Prostate gland (tissue), 2 donors: ENCODE measurements at regions of chr7 and their contacts with region 1.

Region 1: DNA sequence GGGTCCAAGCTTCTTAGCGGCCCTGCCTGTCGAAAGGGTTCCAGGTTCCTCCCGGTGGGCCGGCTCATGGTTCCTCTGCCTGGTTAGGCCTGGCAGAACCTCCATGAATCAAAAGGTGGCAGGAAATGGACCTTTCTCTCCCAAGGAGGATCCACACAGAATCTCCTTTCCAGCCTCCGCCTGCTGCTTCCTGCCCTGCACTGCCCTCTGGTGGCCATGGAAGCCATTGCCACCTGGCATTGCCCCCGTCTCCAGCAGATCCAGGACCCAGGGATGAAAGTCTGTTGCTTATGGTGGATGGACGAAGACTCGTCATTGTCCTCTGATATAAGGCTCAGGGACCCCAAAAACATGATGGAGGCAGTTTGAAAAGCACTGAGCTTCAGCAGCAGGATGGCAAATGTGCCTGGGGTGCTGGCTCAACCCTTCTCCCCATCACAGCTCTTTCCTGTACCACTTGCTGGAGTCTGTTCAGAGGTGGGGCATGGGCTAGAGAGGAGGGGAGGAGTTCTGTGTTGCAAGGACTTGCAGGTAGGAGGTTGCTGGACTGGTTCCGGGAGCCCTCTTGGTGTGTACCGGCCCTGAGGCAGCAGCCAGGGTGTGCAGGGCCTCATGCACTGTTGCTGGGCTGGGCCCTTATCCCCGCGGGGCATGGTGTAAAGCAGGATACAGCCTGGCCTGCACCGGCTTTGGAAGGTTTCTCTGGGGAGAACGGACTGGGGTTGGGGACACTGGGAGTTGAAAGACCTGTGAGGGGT is 11.3 kb upstream of the INMT start:
- DNase-seq: peak; percentile 57
- H3K4me3 ChIP-seq: no peak overlapping the region
- H3K27ac ChIP-seq: no peak overlapping the region
- H3K4me1 ChIP-seq: no peaks in the 10 kb centered on the region
- H3K27me3 ChIP-seq: no peaks in the 10 kb centered on the region
- CTCF ChIP-seq: peak; percentile 85 to 91 (median 88)
- POLR2A ChIP-seq: no peak

Region 2: DNA sequence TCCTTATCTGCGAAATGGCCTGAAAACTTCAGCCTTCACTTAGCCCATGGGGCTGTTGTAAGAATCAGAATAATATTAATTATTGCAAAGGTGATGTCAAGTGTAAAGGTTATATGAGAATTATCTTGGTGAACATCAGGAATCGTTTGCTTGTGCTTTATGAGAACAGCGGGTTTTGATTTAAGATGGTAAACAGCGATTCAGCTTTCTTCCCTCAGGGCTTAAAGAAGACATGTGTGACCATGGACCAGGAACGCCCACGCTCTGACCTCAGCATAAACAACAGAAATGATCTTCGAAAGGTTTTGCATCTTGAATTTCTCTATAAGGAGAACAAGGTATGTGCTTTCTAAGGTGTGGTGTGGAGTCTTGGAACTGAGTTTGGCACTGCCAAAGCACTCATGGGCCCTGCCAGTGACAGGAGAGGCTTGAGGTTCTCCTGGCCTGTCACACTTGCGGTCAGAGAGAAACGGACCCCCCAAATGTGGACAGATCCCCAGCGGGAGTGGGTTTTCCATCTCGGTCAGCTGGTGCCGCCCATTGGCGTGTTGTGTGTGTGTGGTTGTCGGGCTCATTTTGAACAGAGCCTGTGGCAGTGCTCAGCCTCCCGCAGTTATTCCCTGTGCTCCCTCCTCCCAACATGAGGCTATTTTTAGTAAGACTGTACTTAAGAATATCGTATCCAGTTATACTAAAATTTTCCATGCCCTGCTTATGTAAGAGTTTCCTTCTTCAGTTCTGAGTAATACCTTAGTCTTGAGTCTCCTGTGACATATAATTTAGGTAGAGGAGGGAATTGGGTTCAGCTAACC is 37.8 kb after region 1 on chr7:
- intact Hi-C with region 1: no loop called
- DNase-seq: peak; percentile 36
- H3K4me3 ChIP-seq: no peak overlapping the region
- H3K27ac ChIP-seq: peak overlapping the region; percentile 36 to 64
- H3K4me1 ChIP-seq: peaks cover 4% of the 10 kb centered on the region
- H3K27me3 ChIP-seq: no peaks in the 10 kb centered on the region
- CTCF ChIP-seq: no peak
- POLR2A ChIP-seq: no peak

Region 3: DNA sequence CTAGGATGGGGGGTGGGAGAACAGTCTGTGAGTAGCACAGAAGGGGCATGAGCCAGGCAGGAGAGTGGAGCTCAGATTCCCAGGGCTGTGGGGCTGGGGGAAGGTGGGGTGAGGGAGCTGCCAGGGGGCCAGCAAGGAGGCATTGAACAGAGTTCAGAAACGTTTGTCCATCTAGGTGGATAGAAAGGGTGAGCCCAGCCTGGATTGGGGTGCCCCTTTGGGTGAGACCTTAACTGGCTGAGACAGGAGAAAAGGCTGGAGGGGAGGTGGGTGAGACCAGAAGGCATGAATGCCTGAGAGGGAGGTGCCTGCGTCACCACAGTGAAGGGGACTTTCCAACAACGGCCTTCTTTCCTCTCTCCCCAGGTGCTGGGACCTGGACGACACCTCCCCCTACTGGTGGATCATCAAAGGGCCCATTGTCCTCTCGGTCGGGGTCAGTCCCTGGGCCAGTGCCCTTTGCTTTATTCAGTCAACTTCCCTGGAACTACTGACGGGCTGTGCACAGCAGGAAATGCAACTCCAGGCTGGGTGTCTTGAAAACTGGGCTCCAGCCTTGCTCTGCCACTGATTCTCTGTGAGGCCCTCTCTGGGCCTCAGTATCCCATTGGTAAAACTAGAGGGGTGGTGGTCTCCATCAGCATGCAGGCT is 234.1 kb after region 1 on chr7:
- intact Hi-C with region 1: loop called (anchors 5 kb)
- DNase-seq: peak; percentile 29
- H3K4me3 ChIP-seq: no peak overlapping the region
- H3K27ac ChIP-seq: no peak overlapping the region
- H3K4me1 ChIP-seq: peaks cover 15% of the 10 kb centered on the region
- H3K27me3 ChIP-seq: no peaks in the 10 kb centered on the region
- CTCF ChIP-seq: peak; percentile 17 to 72 (median 53)
- POLR2A ChIP-seq: no peak